Activated naive CD4-positive, alpha-beta T cell treated with anti-CD3 and anti-CD28 coated beads for 36 hours (primary cell): ENCODE measurements at regions of chr3 and their contacts with region 1.

Region 1: DNA sequence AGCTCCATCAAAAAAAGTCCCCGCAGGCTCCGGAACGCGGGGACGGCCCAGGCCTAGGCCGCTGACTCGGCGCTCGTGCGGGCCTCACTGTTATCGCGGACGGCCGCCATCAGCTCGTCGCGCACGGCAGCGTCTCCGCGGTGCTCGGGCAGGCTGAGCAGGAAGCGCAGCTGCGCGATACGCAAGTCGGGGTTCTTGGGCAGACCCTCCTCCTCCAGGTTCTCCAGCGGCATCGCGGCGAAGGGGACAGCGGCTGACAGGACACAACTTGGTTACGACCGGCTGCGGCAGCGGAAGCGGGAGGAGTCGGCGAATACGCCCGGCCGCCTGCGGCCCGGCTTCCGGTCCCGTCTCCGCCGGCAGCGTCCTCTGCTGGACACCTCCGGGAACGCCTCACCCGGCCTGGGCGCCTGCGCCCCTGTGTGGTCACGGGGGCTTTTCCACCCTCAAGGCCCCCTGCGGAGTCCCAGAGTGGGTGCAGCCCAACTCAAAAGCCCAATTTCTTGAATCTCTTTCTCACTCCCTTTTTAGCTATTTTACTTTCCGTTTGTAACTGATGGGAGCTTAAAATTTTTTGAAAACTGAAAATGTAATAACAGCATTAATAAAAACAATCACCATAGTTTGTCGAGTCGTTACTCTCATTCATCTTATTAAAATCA is at the start of gene PSMD6:
- DNase-seq: peak; percentile 92
- H3K4me3 Mint-ChIP-seq: peak within 1 kb of the TSS; percentile 85
- H3K27ac Mint-ChIP-seq: peak within 1 kb of the TSS; percentile 83
- H3K4me1 Mint-ChIP-seq: peaks cover 36% of the 10 kb centered on the region
- H3K27me3 Mint-ChIP-seq: peaks cover 5% of the 10 kb centered on the region
- total RNA-seq, gene PSMD6: 101 to 103 TPM

Region 2: GRCh38 chr3:63863148-63864007 is 159.9 kb before region 1 on chr3 and contains the starts of genes ATXN7 and THOC7:
- CTCF ChIA-PET with region 1: no interaction called
- intact Hi-C with region 1: loop called (anchors 2 kb)
- DNase-seq: peak; percentile 56
- H3K4me3 Mint-ChIP-seq: peak within 1 kb of the TSS; percentile 93
- H3K27ac Mint-ChIP-seq: peak within 1 kb of the TSS; percentile 92
- H3K4me1 Mint-ChIP-seq: peaks cover 58% of the 10 kb centered on the region
- H3K27me3 Mint-ChIP-seq: no peaks in the 10 kb centered on the region
- total RNA-seq, gene ATXN7: 25.5 to 25.8 TPM
- total RNA-seq, gene THOC7: 72.8 to 77.0 TPM

Region 3: DNA sequence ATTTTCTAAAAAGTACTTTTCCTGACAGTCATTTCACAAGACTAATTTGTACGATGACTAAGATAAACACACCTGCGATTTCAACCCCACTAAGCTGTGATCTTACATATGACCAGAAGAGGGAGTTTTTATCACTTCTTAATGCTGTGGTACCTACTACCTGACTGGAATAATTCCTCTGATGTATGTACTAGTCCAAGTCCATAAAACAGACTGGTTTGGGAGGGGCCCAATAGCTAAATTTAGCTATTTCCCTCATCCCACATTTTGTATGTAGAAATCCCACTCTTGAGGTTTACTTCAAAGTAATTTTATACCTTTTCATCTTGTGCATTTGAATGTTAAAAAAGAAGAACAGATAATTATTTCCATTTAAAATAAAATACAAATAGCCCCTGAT is 61.4 kb before region 1 on chr3:
- CTCF ChIA-PET with region 1: interaction called, 5 read pairs
- intact Hi-C with region 1: loop called (anchors 1 kb)
- DNase-seq: no peak
- H3K4me3 Mint-ChIP-seq: no peak overlapping the region
- H3K27ac Mint-ChIP-seq: no peak overlapping the region
- H3K4me1 Mint-ChIP-seq: peaks cover 43% of the 10 kb centered on the region
- H3K27me3 Mint-ChIP-seq: no peaks in the 10 kb centered on the region

Region 4: DNA sequence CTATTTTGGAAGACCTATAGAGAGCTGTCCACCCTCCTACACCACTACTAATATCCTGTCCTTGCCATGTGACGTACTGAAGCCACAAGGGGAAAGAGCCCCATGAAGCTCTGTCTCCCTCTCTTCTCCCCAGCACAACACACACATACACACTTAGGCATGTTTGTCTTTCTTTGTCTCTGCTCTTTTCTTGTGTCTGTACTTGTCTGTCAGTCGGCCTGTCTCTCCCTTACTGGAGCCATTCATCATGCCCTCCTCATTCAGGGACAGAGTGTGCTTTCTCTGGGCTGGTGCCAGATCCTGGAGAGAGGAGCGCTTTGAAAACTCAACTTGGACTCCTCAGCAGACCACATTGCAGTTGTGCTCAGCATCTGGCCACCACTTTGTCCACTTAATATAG is 47.6 kb before region 1 on chr3:
- CTCF ChIA-PET with region 1: interaction called, 8 read pairs
- intact Hi-C with region 1: loop called (anchors 2 kb)
- DNase-seq: no peak
- H3K4me3 Mint-ChIP-seq: no peak overlapping the region
- H3K27ac Mint-ChIP-seq: peak overlapping the region; percentile 57
- H3K4me1 Mint-ChIP-seq: peaks cover 91% of the 10 kb centered on the region
- H3K27me3 Mint-ChIP-seq: no peaks in the 10 kb centered on the region

Region 5: GRCh38 chr3:64484289-64484992 is 461.1 kb after region 1 on chr3:
- CTCF ChIA-PET with region 1: interaction called, 26 read pairs
- intact Hi-C with region 1: loop called (anchors 2 kb)
- DNase-seq: peak; percentile 89
- H3K4me3 Mint-ChIP-seq: no peak overlapping the region
- H3K27ac Mint-ChIP-seq: no peak overlapping the region
- H3K4me1 Mint-ChIP-seq: peaks cover 3% of the 10 kb centered on the region
- H3K27me3 Mint-ChIP-seq: peaks cover 21% of the 10 kb centered on the region